ENCODE measurements at regions of chr15 and their contacts with region 1.

Region 1: GRCh38 chr15:70097337-70098169 is at the start of gene TLE3:
- DNase-seq: peak; percentile 98
- H3K4me3 ChIP-seq: peak within 1 kb of the TSS; percentile 52 to 88
- H3K4me3 Mint-ChIP-seq: peak within 1 kb of the TSS; percentile 95 to 100 (median 98)
- H3K27ac ChIP-seq: peak within 1 kb of the TSS; percentile 88
- H3K27ac Mint-ChIP-seq: peak within 1 kb of the TSS; percentile 98 to 100 (median 99)
- H3K4me1 ChIP-seq: peaks cover 54% of the 10 kb centered on the region
- H3K4me1 Mint-ChIP-seq: peaks cover 32 to 70% (median 45%) of the 10 kb centered on the region in 4 donors
- H3K27me3 ChIP-seq: no peaks in the 10 kb centered on the region
- H3K27me3 Mint-ChIP-seq: peaks cover 2 to 9% of the 10 kb centered on the region in 2 donors
- total RNA-seq, gene TLE3: 118 to 121 TPM

Region 2: DNA sequence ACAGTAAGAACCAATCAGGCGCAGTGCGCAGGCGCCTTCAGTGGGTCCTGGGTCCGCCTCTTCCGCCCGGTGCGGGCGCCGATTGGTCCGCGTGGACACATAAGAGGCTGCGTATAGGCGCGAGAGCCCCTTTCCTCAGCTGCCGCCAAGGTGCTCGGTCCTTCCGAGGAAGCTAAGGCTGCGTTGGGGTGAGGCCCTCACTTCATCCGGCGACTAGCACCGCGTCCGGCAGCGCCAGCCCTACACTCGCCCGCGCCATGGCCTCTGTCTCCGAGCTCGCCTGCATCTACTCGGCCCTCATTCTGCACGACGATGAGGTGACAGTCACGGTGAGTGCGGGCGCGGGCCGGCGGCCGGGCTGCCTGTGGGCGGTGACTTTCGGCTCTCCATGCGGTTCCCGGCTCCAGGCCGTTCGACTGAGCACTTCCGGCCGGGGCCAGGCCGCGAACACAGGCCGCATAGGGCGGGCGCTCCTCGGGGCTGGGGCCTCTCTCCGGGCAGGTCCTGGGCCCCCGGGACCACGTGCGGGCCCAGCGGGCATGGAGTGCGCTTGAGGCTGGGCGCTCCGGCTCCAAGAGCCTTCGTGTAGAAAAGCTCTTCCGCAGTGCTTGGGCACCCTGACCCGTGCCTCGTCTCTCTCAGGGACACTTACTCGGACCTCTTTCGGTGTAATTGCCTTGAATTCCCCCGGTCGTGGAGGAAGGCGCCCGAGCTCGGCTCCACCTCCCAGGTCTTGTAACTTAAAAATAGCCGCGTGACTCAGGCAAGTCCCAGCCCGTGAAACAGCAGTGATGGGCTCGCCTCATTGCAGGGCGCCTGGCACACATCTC is 644.6 kb before region 1 on chr15 and contains the start of gene RPLP1:
- CTCF ChIA-PET with region 1: no interaction called
- POLR2A ChIA-PET with region 1: interaction called, 23 read pairs
- intact Hi-C with region 1: loop called (anchors 2 kb)
- DNase-seq: peak; percentile 96
- H3K4me3 ChIP-seq: peak within 1 kb of the TSS; percentile 78 to 91
- H3K4me3 Mint-ChIP-seq: peak within 1 kb of the TSS; percentile 94 to 100 (median 98)
- H3K27ac ChIP-seq: peak within 1 kb of the TSS; percentile 92
- H3K27ac Mint-ChIP-seq: peak within 1 kb of the TSS; percentile 94 to 99 (median 98)
- H3K4me1 ChIP-seq: peaks cover 36% of the 10 kb centered on the region
- H3K4me1 Mint-ChIP-seq: peaks cover 28 to 56% (median 37%) of the 10 kb centered on the region in 4 donors
- H3K27me3 ChIP-seq: no peaks in the 10 kb centered on the region
- H3K27me3 Mint-ChIP-seq: no peaks in the 10 kb centered on the region
- total RNA-seq, gene RPLP1: 2,753 to 2,900 TPM

Region 3: GRCh38 chr15:69576035-69576526 is 521.5 kb before region 1 on chr15:
- CTCF ChIA-PET with region 1: interaction called, 18 read pairs
- POLR2A ChIA-PET with region 1: interaction called, 11 read pairs
- intact Hi-C with region 1: loop called (anchors 1 kb)
- DNase-seq: peak; percentile 59 to 64 (median 61)
- H3K4me3 ChIP-seq: no peak overlapping the region
- H3K4me3 Mint-ChIP-seq: peak overlapping the region in 1 of 8 donors; percentile 37
- H3K27ac ChIP-seq: no peak overlapping the region
- H3K27ac Mint-ChIP-seq: peak overlapping the region in 2 of 7 donors; percentile 25 to 38
- H3K4me1 ChIP-seq: peaks cover 35% of the 10 kb centered on the region
- H3K4me1 Mint-ChIP-seq: peaks cover 18 to 41% (median 33%) of the 10 kb centered on the region in 4 donors
- H3K27me3 ChIP-seq: no peaks in the 10 kb centered on the region
- H3K27me3 Mint-ChIP-seq: peaks cover 0 to 1% of the 10 kb centered on the region in 2 donors

Region 4: GRCh38 chr15:69729161-69729748 is 368.3 kb before region 1 on chr15:
- CTCF ChIA-PET with region 1: interaction called, 6 read pairs
- POLR2A ChIA-PET with region 1: interaction called, 144 read pairs
- intact Hi-C with region 1: loop called (anchors 1 kb)
- DNase-seq: peak; percentile 59 to 68 (median 64)
- H3K4me3 ChIP-seq: no peak overlapping the region
- H3K4me3 Mint-ChIP-seq: peak overlapping the region in 1 of 8 donors; percentile 10
- H3K27ac ChIP-seq: no peak overlapping the region
- H3K27ac Mint-ChIP-seq: peak overlapping the region in 1 of 7 donors; percentile 0
- H3K4me1 ChIP-seq: peaks cover 20% of the 10 kb centered on the region
- H3K4me1 Mint-ChIP-seq: peaks cover 9 to 32% (median 23%) of the 10 kb centered on the region in 4 donors
- H3K27me3 ChIP-seq: no peaks in the 10 kb centered on the region
- H3K27me3 Mint-ChIP-seq: peaks cover 0 to 2% of the 10 kb centered on the region in 2 donors

Region 5: GRCh38 chr15:70023064-70023768 is 74.3 kb before region 1 on chr15:
- CTCF ChIA-PET with region 1: interaction called, 5 read pairs
- POLR2A ChIA-PET with region 1: interaction called, 41 read pairs
- intact Hi-C with region 1: loop called (anchors 1 kb)
- DNase-seq: peak; percentile 75 to 90 (median 80)
- H3K4me3 ChIP-seq: no peak overlapping the region
- H3K4me3 Mint-ChIP-seq: peak overlapping the region in 4 of 8 donors; percentile 55 to 77 (median 68)
- H3K27ac ChIP-seq: no peak overlapping the region
- H3K27ac Mint-ChIP-seq: peak overlapping the region; percentile 71 to 96 (median 91)
- H3K4me1 ChIP-seq: peaks cover 20% of the 10 kb centered on the region
- H3K4me1 Mint-ChIP-seq: peaks cover 8 to 25% (median 17%) of the 10 kb centered on the region in 4 donors
- H3K27me3 ChIP-seq: no peaks in the 10 kb centered on the region
- H3K27me3 Mint-ChIP-seq: no peaks in the 10 kb centered on the region

Region 6: GRCh38 chr15:70466895-70467529 is 369.5 kb after region 1 on chr15:
- CTCF ChIA-PET with region 1: interaction called, 4 read pairs
- POLR2A ChIA-PET with region 1: interaction called, 4 read pairs
- intact Hi-C with region 1: loop called (anchors 5 kb)
- DNase-seq: peak in 4 of 5 donors; percentile 30 to 50 (median 46)
- H3K4me3 ChIP-seq: no peak overlapping the region
- H3K4me3 Mint-ChIP-seq: no peak overlapping the region
- H3K27ac ChIP-seq: no peak overlapping the region
- H3K27ac Mint-ChIP-seq: no peak overlapping the region
- H3K4me1 ChIP-seq: peaks cover 6% of the 10 kb centered on the region
- H3K4me1 Mint-ChIP-seq: peaks cover 4 to 5% (median 5%) of the 10 kb centered on the region in 4 donors
- H3K27me3 ChIP-seq: no peaks in the 10 kb centered on the region
- H3K27me3 Mint-ChIP-seq: peaks cover 0 to 8% of the 10 kb centered on the region in 2 donors

Region 7: DNA sequence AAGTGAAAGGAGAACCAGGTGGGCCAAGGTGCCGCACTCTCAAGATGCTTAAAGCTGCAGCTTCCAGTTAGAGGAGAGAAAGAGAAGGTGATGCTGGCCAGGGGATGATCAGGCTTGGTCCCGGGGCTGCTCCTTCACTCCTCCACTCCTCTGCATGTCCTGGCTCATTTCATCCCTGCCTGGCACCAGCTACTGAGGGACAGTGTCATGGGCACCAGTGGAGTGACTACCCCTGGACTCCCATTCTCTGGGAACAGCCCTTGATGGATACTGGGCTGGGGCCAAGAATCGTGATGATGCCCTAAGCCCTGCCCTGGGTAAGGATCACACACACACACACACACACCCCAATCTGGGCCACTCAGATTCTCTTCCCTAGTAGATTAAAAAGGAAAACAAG is 422.1 kb after region 1 on chr15:
- CTCF ChIA-PET with region 1: no interaction called
- POLR2A ChIA-PET with region 1: no interaction called
- intact Hi-C with region 1: no loop called
- DNase-seq: no peak
- H3K4me3 ChIP-seq: no peak overlapping the region
- H3K4me3 Mint-ChIP-seq: no peak overlapping the region
- H3K27ac ChIP-seq: no peak overlapping the region
- H3K27ac Mint-ChIP-seq: no peak overlapping the region
- H3K4me1 ChIP-seq: no peaks in the 10 kb centered on the region
- H3K4me1 Mint-ChIP-seq: peaks cover 0 to 4% (median 2%) of the 10 kb centered on the region in 4 donors
- H3K27me3 ChIP-seq: no peaks in the 10 kb centered on the region
- H3K27me3 Mint-ChIP-seq: peaks cover 0 to 3% of the 10 kb centered on the region in 2 donors

Measured in CD4-positive, alpha-beta memory T cell (primary cell).